Activated CD8-positive, alpha-beta T cell treated with anti-CD3 and anti-CD28 coated beads, Interleukin-2, amount 10 ng/mL, durations not matched to agents 7 days and 5 days (primary cell): ENCODE measurements at regions of chr5 and their contacts with region 1.

Region 1: GRCh38 chr5:175444060-175444904 is at the start of gene DRD1:
- DNase-seq: peak; percentile 32
- ATAC-seq: peak; percentile 89
- H3K4me3 Mint-ChIP-seq: peak within 1 kb of the TSS; percentile 19
- H3K27ac Mint-ChIP-seq: no peak within 1 kb of the TSS
- H3K4me1 Mint-ChIP-seq: peaks cover 7% of the 10 kb centered on the region
- H3K27me3 Mint-ChIP-seq: peaks cover 63% of the 10 kb centered on the region
- total RNA-seq, gene DRD1: not detected

Region 2: DNA sequence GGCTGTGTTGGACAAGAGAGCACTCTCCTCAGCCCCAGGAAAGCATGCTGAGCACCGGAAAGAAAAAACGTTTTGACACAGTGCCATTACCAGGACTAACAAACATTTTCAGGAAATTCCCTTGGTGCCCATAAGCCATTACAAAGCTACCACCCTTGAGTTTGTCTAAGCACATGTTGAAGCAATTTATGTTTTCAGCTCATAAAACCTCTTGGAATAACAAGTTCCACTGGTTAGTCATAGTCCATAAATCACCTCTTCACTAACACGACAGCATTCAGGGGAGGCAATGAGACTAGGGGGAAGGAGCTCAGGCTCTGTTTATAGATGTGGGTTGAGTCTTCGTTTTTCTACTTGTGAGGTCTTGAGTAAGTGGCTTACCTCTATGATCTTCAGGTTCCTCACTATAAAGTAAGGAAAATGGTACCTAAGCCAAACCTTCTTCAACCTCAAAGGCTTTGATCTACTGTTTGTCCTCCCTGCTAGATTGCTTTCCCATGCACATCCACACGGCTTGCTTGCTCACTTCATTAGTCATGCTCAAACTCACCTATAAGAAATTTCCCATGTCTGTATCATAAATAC is 65.7 kb before region 1 on chr5:
- CTCF ChIA-PET with region 1: no interaction called
- POLR2A ChIA-PET with region 1: no interaction called
- DNase-seq: no peak
- ATAC-seq: no peak
- H3K4me3 Mint-ChIP-seq: no peak overlapping the region
- H3K27ac Mint-ChIP-seq: no peak overlapping the region
- H3K4me1 Mint-ChIP-seq: no peaks in the 10 kb centered on the region
- H3K27me3 Mint-ChIP-seq: peaks cover 26% of the 10 kb centered on the region

Region 3: DNA sequence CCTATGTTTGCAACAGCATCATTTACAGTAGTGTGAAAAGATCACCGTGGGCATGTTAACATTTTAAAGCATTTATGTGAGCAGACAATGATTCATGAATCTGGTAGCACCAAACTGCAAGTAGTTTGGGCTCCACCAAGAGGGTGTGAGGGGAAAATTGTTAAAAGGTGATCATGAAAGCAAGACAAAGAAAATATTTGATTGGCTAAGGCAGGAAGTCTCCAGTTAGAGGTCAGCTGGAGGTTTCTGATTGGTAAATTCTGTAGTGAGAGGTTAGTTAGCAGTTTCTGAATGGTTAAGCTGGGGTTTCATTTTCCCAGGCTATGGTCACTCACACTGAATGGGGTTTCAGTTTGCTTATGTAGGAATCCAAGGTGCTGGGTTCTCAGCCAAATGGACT is 13.2 kb after region 1 on chr5:
- CTCF ChIA-PET with region 1: interaction called, 10 read pairs
- POLR2A ChIA-PET with region 1: no interaction called
- DNase-seq: no peak
- ATAC-seq: no peak
- H3K4me3 Mint-ChIP-seq: no peak overlapping the region
- H3K27ac Mint-ChIP-seq: no peak overlapping the region
- H3K4me1 Mint-ChIP-seq: peaks cover 14% of the 10 kb centered on the region
- H3K27me3 Mint-ChIP-seq: peaks cover 22% of the 10 kb centered on the region